ENCODE measurements at regions of chr3 and their contacts with region 1.

Region 1: DNA sequence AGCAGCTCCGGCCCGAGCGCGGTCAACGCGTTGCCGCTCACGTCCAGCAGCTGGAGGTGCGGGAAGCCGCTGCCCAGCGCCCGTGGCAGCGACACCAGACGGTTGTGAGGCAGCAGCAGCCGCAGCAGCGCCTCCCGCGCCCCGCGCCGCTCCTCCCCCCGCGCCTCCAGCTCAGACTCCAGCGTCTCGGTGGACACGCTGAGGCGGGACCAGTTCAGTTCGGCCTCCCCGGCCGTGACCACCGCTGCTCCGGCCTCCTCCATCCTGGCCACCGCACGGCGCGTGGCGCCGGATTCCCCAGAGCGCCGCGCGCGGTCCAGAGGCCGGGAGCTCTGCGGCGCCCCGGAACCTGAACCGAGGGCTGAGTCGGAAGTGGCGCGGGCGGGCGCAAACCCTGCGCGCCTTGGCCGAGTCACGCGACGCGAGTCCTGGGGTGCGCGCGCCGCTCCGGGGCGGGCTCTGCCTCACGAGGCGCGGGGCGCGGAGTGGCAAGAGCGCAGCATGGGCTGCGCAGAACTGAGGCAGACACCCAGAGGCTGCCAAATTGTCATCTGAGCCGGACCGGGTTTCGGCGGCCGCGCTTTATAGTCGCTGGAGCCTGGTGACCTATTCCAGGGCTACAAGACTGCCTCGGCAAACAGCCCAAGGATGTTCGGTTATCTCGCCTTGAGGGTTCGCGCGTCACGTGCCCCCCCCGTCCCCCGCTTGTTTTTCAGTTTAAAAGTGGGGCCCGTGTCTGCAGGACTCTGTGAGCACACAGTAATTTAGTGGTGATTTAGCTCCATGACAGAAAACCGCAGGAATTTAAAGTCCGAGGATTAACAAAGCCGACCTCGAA is at the start of gene LRRC58:
- DNase-seq: peak; percentile 78 to 96 (median 87)
- ATAC-seq: peak; percentile 86
- H3K4me3 ChIP-seq: peak within 1 kb of the TSS; percentile 65
- H3K4me3 Mint-ChIP-seq: peak within 1 kb of the TSS; percentile 93
- H3K27ac ChIP-seq: peak within 1 kb of the TSS; percentile 65 to 74
- H3K27ac Mint-ChIP-seq: peak within 1 kb of the TSS; percentile 94
- H3K4me1 ChIP-seq: peaks cover 18% of the 10 kb centered on the region
- H3K4me1 Mint-ChIP-seq: peaks cover 52% of the 10 kb centered on the region
- H3K27me3 ChIP-seq: peaks cover 0 to 3% of the 10 kb centered on the region in 2 experiments
- H3K27me3 Mint-ChIP-seq: no peaks in the 10 kb centered on the region
- CTCF ChIP-seq: peak; percentile 45
- total RNA-seq, gene LRRC58: 16.6 to 17.7 TPM

Region 2: DNA sequence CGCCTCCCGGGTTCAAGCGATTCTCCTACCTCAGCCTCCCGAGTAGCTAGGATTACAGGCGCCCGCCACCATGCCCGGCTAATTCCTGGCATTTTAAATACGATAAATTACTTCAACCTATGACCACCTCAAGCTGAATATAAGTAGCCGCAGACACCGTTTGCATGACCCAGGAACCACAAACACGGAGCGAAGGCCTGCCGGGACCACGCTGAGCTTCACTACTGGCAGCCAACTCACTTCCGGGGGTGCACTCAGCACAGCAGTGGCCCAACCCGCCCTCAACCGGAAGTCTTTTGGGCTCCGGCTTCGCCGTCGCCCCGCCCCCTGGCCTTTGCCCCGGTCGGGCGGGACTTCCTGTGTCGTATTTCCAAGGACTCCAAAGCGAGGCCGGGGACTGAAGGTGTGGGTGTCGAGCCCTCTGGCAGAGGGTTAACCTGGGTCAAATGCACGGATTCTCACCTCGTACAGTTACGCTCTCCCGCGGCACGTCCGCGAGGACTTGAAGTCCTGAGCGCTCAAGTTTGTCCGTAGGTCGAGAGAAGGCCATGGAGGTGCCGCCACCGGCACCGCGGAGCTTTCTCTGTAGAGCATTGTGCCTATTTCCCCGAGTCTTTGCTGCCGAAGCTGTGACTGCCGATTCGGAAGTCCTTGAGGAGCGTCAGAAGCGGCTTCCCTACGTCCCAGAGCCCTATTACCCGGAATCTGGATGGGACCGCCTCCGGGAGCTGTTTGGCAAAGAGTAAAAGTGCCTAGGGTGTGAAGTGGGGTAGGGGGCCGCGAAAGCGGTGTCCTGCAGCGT is 850.8 kb before region 1 on chr3 and contains the start of gene TIMMDC1:
- CTCF ChIA-PET with region 1: no interaction called
- POLR2A ChIA-PET with region 1: interaction called, 11 read pairs
- intact Hi-C with region 1: loop called in 1 of 2 experiments (anchors 10 kb)
- DNase-seq: peak; percentile 94 to 99 (median 96)
- ATAC-seq: peak; percentile 97
- H3K4me3 ChIP-seq: peak within 1 kb of the TSS; percentile 95
- H3K4me3 Mint-ChIP-seq: peak within 1 kb of the TSS; percentile 99
- H3K27ac ChIP-seq: peak within 1 kb of the TSS; percentile 90 to 93
- H3K27ac Mint-ChIP-seq: peak within 1 kb of the TSS; percentile 99
- H3K4me1 ChIP-seq: peaks cover 20% of the 10 kb centered on the region
- H3K4me1 Mint-ChIP-seq: peaks cover 42% of the 10 kb centered on the region
- H3K27me3 ChIP-seq: no peaks in the 10 kb centered on the region
- H3K27me3 Mint-ChIP-seq: no peaks in the 10 kb centered on the region
- CTCF ChIP-seq: no peak
- total RNA-seq, gene TIMMDC1: 14.4 to 18.3 TPM

Region 3: DNA sequence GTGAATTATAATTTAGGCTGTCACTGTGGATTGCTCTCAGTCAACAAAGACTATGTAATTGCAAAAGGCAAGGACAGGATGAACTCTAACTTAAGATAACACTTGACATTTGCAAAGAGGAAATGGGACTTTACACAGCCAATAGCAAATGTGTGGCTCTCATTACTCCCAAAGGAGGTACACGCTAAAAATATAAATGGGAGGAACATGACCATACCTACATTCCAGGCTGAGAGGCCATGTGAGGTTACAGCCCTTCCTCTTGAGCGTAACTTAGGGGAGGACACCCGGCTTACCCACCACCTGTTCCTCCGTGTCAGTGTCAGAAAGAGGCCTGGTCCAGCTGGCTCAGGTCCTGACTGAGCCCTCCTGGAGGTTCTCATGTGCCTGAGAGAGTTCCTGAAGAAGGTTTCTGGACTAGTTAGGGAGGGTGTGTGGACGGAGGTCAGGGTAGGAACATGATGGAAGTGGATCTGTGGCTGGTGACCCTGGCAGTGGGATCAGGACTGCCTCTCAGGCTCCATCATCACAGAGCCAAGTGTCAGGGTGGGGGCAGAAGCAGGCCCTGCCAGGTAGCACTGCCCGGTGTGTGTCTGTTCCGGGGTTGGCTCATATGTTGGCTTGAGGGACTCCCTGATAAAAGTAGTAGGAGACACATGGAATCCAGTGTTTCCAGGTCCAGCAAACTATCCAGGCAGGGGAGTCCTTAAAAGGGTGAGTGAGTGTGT is 696.7 kb before region 1 on chr3:
- CTCF ChIA-PET with region 1: no interaction called
- POLR2A ChIA-PET with region 1: no interaction called
- intact Hi-C with region 1: no loop called
- DNase-seq: no peak
- ATAC-seq: no peak
- H3K4me3 ChIP-seq: no peak overlapping the region
- H3K4me3 Mint-ChIP-seq: no peak overlapping the region
- H3K27ac ChIP-seq: no peak overlapping the region
- H3K27ac Mint-ChIP-seq: no peak overlapping the region
- H3K4me1 ChIP-seq: no peaks in the 10 kb centered on the region
- H3K4me1 Mint-ChIP-seq: no peaks in the 10 kb centered on the region
- H3K27me3 ChIP-seq: no peaks in the 10 kb centered on the region
- H3K27me3 Mint-ChIP-seq: no peaks in the 10 kb centered on the region
- CTCF ChIP-seq: no peak

Region 4: DNA sequence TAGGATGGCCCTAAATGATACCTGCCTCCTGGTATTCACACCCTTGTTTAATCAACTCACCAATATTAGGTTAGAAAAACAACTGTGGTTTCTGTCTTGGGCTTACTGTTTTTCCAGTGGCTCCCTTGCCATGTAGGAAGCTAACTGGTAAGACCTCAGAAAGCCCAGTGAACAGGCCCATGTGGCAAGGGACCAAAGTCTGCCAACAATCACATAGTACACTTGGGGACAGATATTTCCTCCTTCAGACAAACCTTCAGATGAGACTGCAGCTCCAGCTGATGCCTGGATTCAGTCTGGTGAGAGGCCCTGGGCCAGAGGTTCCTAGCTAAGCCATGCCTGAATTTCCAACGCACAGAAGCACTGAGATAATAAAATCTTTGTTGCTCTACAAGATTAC is 351.0 kb before region 1 on chr3:
- CTCF ChIA-PET with region 1: no interaction called
- POLR2A ChIA-PET with region 1: no interaction called
- intact Hi-C with region 1: no loop called
- DNase-seq: no peak
- ATAC-seq: no peak
- H3K4me3 ChIP-seq: no peak overlapping the region
- H3K4me3 Mint-ChIP-seq: no peak overlapping the region
- H3K27ac ChIP-seq: no peak overlapping the region
- H3K27ac Mint-ChIP-seq: no peak overlapping the region
- H3K4me1 ChIP-seq: no peaks in the 10 kb centered on the region
- H3K4me1 Mint-ChIP-seq: peaks cover 44% of the 10 kb centered on the region
- H3K27me3 ChIP-seq: no peaks in the 10 kb centered on the region
- H3K27me3 Mint-ChIP-seq: no peaks in the 10 kb centered on the region
- CTCF ChIP-seq: no peak

Region 5: DNA sequence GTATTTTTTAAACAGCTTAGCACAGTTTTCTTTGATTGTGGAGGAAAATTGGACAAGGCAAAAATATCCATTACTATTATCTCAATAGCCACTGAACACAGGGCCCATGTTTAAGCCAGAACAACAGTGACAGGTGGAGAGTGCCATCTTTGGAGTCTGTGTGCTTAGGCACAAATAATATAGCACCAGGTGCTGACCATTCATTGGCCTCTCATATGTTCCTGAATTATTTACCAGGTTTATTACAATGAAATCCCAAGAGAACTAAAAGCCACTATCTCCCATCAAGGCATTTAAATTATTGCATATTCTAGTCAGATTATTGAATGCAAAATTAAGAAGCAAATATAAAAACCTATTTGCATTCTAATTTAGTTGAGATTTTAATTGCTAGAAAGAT is 103.8 kb before region 1 on chr3:
- CTCF ChIA-PET with region 1: interaction called, 4 read pairs
- POLR2A ChIA-PET with region 1: interaction called, 3 read pairs
- intact Hi-C with region 1: loop called in 1 of 2 experiments (anchors 10 kb)
- DNase-seq: no peak
- ATAC-seq: no peak
- H3K4me3 ChIP-seq: no peak overlapping the region
- H3K4me3 Mint-ChIP-seq: no peak overlapping the region
- H3K27ac ChIP-seq: no peak overlapping the region
- H3K27ac Mint-ChIP-seq: no peak overlapping the region
- H3K4me1 ChIP-seq: no peaks in the 10 kb centered on the region
- H3K4me1 Mint-ChIP-seq: no peaks in the 10 kb centered on the region
- H3K27me3 ChIP-seq: no peaks in the 10 kb centered on the region
- H3K27me3 Mint-ChIP-seq: peaks cover 38% of the 10 kb centered on the region
- CTCF ChIP-seq: no peak

Region 6: GRCh38 chr3:120558771-120559241 is 209.6 kb after region 1 on chr3:
- CTCF ChIA-PET with region 1: interaction called, 15 read pairs
- POLR2A ChIA-PET with region 1: no interaction called
- intact Hi-C with region 1: loop called (anchors 2 to 5 kb)
- DNase-seq: peak; percentile 74 to 94 (median 86)
- ATAC-seq: peak; percentile 93
- H3K4me3 ChIP-seq: peak overlapping the region; percentile 43
- H3K4me3 Mint-ChIP-seq: peak overlapping the region; percentile 78
- H3K27ac ChIP-seq: no peak overlapping the region
- H3K27ac Mint-ChIP-seq: peak overlapping the region; percentile 63
- H3K4me1 ChIP-seq: peaks cover 15% of the 10 kb centered on the region
- H3K4me1 Mint-ChIP-seq: peaks cover 24% of the 10 kb centered on the region
- H3K27me3 ChIP-seq: no peaks in the 10 kb centered on the region
- H3K27me3 Mint-ChIP-seq: peaks cover 16% of the 10 kb centered on the region
- CTCF ChIP-seq: peak; percentile 98

Region 7: DNA sequence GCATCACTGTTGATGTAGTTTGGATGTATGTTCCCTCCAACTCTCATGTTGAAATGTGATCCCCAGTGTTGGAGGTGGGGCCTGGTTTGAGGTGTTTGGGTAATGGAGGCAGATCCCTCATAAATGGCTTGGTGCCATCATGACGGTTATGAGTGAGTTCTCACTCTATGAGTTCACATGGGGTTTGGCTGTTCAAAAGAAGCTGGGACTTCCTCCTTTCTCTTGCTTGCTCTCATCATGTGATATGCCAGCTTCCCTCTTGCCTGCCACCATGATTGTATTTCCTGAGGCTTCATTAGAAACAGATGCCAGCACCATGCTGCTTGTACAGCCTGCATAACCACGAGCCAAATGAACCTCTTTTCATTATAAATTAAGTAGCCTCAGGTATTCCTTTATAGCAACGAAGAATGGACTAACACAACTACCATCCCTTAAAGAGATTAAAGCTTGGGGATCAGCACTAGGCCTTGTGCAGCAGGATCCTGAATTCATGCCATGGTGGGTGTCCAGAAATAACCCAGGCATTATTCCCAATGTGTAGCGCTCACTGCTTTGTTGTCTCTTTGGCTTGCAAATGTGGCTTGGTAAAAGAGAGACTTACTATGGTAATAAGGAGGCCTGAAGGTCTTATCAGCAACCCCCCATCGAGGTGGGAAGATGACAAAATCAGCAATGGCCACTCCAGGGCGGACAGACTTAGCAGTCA is 288.8 kb after region 1 on chr3:
- CTCF ChIA-PET with region 1: no interaction called
- POLR2A ChIA-PET with region 1: no interaction called
- intact Hi-C with region 1: no loop called
- DNase-seq: peak in 1 of 14 experiments; percentile 3
- ATAC-seq: no peak
- H3K4me3 ChIP-seq: no peak overlapping the region
- H3K4me3 Mint-ChIP-seq: no peak overlapping the region
- H3K27ac ChIP-seq: no peak overlapping the region
- H3K27ac Mint-ChIP-seq: no peak overlapping the region
- H3K4me1 ChIP-seq: peaks cover 2% of the 10 kb centered on the region
- H3K4me1 Mint-ChIP-seq: peaks cover 16% of the 10 kb centered on the region
- H3K27me3 ChIP-seq: no peaks in the 10 kb centered on the region
- H3K27me3 Mint-ChIP-seq: peaks cover 4% of the 10 kb centered on the region
- CTCF ChIP-seq: no peak

Region 8: DNA sequence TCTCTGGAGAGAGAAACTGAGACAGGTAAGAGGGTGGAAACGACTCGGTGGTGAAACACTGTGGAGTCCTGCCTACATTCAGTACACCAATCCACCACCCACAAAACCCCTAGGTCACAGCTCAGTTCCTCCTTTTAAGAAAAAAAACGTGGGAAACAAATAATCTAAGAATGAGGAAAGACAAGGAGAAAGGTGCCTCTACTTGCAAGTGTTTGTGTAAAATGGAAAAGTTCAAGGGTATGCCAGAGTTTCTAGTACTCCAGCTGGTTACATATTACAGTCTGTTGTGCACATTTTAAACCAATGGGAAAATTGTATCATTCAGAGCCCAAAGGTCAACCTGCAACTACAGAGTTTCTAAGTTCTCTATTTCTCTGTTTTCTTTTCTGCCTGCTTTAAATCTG is 300.6 kb after region 1 on chr3:
- CTCF ChIA-PET with region 1: no interaction called
- POLR2A ChIA-PET with region 1: no interaction called
- intact Hi-C with region 1: no loop called
- DNase-seq: no peak
- ATAC-seq: no peak
- H3K4me3 ChIP-seq: no peak overlapping the region
- H3K4me3 Mint-ChIP-seq: no peak overlapping the region
- H3K27ac ChIP-seq: no peak overlapping the region
- H3K27ac Mint-ChIP-seq: no peak overlapping the region
- H3K4me1 ChIP-seq: no peaks in the 10 kb centered on the region
- H3K4me1 Mint-ChIP-seq: no peaks in the 10 kb centered on the region
- H3K27me3 ChIP-seq: no peaks in the 10 kb centered on the region
- H3K27me3 Mint-ChIP-seq: no peaks in the 10 kb centered on the region
- CTCF ChIP-seq: no peak

Region 9: GRCh38 chr3:120742198-120742849 is 393.1 kb after region 1 on chr3 and contains the starts of genes GTF2E1 and RABL3:
- CTCF ChIA-PET with region 1: no interaction called
- POLR2A ChIA-PET with region 1: interaction called, 4 read pairs
- intact Hi-C with region 1: loop called in 1 of 2 experiments (anchors 5 kb)
- DNase-seq: peak; percentile 90 to 99 (median 94)
- ATAC-seq: peak; percentile 94
- H3K4me3 ChIP-seq: peak within 1 kb of the TSS; percentile 61
- H3K4me3 Mint-ChIP-seq: peak within 1 kb of the TSS; percentile 95
- H3K27ac ChIP-seq: peak within 1 kb of the TSS; percentile 99
- H3K27ac Mint-ChIP-seq: peak within 1 kb of the TSS; percentile 96
- H3K4me1 ChIP-seq: peaks cover 25% of the 10 kb centered on the region
- H3K4me1 Mint-ChIP-seq: peaks cover 50% of the 10 kb centered on the region
- H3K27me3 ChIP-seq: no peaks in the 10 kb centered on the region
- H3K27me3 Mint-ChIP-seq: no peaks in the 10 kb centered on the region
- CTCF ChIP-seq: no peak
- total RNA-seq, gene GTF2E1: 6.3 to 7.5 TPM
- total RNA-seq, gene RABL3: 12.9 to 13.6 TPM